Dendritic cell treated with granulocyte-macrophage colony-stimulating factor and Interleukin-4, amounts not matched to agents 40 ng/mL and 50 ng/mL, for 4 days (primary cell): ENCODE measurements at regions of chr4 and their contacts with region 1.

Region 1: GRCh38 chr4:107989537-107990386 is at the start of gene HADH:
- H3K4me3 Mint-ChIP-seq: peak within 1 kb of the TSS; percentile 96
- H3K27ac Mint-ChIP-seq: peak within 1 kb of the TSS; percentile 94
- H3K4me1 Mint-ChIP-seq: peaks cover 38% of the 10 kb centered on the region
- H3K27me3 Mint-ChIP-seq: no peaks in the 10 kb centered on the region

Region 2: DNA sequence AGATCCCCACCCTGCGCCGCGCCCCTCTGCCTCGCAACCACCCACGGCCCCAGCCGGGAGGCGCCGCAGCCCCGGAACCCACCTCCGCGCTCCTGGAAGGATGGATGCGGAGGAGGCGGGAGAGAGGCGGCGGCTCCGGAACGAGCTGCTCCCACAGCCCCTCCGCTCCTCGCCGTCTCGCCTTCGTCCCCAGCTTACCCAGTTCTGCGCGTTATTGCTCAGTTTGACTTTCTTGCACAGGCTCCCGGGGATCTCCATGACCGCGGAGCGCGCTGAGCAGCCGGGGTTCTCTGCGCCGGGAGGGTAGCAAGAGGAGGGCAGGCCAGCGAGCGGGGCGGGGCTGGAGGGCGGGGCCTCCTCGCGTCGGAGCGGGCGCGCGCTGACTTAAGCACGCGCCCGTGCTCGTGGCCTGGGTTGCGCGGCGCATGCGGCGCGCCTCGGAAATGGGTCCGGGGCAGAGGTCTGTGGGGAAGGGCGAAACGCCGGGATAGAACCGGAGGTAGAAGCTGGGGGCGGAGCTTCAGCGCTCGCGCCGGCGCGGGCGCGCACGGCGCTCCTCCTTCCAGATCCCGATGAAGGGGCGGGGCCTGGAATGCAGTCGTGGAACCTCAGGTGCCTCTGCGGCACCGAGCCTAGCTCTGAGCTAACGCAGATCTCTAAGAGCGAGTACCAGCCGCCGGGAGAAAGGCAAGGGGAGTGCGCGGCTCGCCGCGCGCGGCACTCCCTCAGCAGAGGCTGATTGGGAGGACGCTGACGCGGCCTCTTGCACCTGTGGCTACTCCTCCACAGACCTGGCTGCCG is 269.6 kb before region 1 on chr4 and contains the start of gene PAPSS1:
- intact Hi-C with region 1: loop called (anchors 1 kb)
- H3K4me3 Mint-ChIP-seq: peak within 1 kb of the TSS; percentile 89
- H3K27ac Mint-ChIP-seq: peak within 1 kb of the TSS; percentile 85
- H3K4me1 Mint-ChIP-seq: peaks cover 32% of the 10 kb centered on the region
- H3K27me3 Mint-ChIP-seq: peaks cover 8% of the 10 kb centered on the region

Region 3: GRCh38 chr4:107824353-107825071 is 165.2 kb before region 1 on chr4 and contains the start of gene SGMS2:
- intact Hi-C with region 1: loop called (anchors 5 kb)
- H3K4me3 Mint-ChIP-seq: peak within 1 kb of the TSS; percentile 95
- H3K27ac Mint-ChIP-seq: peak within 1 kb of the TSS; percentile 94
- H3K4me1 Mint-ChIP-seq: peaks cover 49% of the 10 kb centered on the region
- H3K27me3 Mint-ChIP-seq: peaks cover 2% of the 10 kb centered on the region

Region 4: GRCh38 chr4:107930821-107931774 is 58.7 kb before region 1 on chr4 and contains the start of gene CYP2U1:
- intact Hi-C with region 1: loop called (anchors 5 kb)
- H3K4me3 Mint-ChIP-seq: peak within 1 kb of the TSS; percentile 76
- H3K27ac Mint-ChIP-seq: peak within 1 kb of the TSS; percentile 72
- H3K4me1 Mint-ChIP-seq: peaks cover 23% of the 10 kb centered on the region
- H3K27me3 Mint-ChIP-seq: peaks cover 18% of the 10 kb centered on the region

Region 5: GRCh38 chr4:107951551-107951950 is 38.2 kb before region 1 on chr4:
- intact Hi-C with region 1: no loop called
- H3K4me3 Mint-ChIP-seq: no peak overlapping the region
- H3K27ac Mint-ChIP-seq: no peak overlapping the region
- H3K4me1 Mint-ChIP-seq: no peaks in the 10 kb centered on the region
- H3K27me3 Mint-ChIP-seq: no peaks in the 10 kb centered on the region